Activated CD4-positive, alpha-beta T cell treated with anti-CD3 and anti-CD28 coated beads for 36 hours (primary cell): ENCODE measurements at regions of chr12 and their contacts with region 1.

Region 1: GRCh38 chr12:56224102-56224701 is at the start of gene NABP2:
- DNase-seq: peak; percentile 98
- ATAC-seq: peak; percentile 83
- H3K4me3 Mint-ChIP-seq: peak within 1 kb of the TSS; percentile 98
- H3K27ac Mint-ChIP-seq: peak within 1 kb of the TSS; percentile 88
- H3K4me1 Mint-ChIP-seq: peaks cover 37% of the 10 kb centered on the region
- H3K27me3 Mint-ChIP-seq: no peaks in the 10 kb centered on the region
- total RNA-seq, gene NABP2: 69.1 to 76.0 TPM

Region 2: DNA sequence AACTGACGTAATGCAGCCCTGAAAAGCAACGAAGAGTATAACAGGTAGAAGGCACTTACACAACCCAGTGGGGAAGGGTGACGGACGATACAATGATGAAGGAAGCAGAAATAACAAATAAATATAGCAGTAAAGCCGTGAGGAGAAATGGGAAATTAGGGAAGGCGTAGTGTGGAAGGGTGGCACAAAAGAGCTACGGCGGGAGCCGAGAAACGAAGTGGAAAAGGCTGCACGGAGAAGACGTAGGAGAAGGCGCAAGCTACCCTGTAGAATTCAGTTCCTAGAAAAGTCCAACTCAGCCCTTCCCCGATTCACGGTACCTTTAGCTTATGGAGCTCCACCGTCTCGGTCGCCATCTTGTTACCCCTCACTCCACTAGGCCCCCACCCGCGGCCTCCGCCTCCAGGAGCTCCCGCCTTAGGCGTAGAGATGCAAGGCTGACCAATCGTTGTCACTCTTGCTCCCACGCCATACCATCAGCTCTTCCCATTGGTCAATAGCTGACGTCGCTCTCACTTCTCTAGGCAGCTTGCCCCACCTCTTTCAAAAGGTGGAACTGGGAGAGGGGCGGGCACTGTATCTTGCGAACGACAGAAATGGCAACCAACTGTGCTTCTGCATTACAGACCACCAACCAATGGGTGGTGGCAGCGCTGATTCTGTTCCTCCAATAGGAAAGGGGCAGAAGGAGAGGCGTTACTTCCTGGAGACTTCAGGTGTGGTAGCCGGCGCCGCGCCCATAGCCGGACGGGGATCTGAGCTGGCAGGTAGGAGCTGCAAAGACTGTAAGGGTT is 406.7 kb before region 1 on chr12 and contains the starts of genes ORMDL2 and SARNP:
- CTCF ChIA-PET with region 1: no interaction called
- POLR2A ChIA-PET with region 1: interaction called, 3 read pairs
- intact Hi-C with region 1: loop called in 1 of 2 experiments (anchors 2 kb)
- DNase-seq: peak; percentile 97
- ATAC-seq: peak; percentile 98
- H3K4me3 Mint-ChIP-seq: no peak within 1 kb of the TSS
- H3K27ac Mint-ChIP-seq: no peak within 1 kb of the TSS
- H3K4me1 Mint-ChIP-seq: peaks cover 49% of the 10 kb centered on the region
- H3K27me3 Mint-ChIP-seq: no peaks in the 10 kb centered on the region
- total RNA-seq, gene ORMDL2: 29.4 to 35.6 TPM
- total RNA-seq, gene SARNP: 111 to 114 TPM

Region 3: DNA sequence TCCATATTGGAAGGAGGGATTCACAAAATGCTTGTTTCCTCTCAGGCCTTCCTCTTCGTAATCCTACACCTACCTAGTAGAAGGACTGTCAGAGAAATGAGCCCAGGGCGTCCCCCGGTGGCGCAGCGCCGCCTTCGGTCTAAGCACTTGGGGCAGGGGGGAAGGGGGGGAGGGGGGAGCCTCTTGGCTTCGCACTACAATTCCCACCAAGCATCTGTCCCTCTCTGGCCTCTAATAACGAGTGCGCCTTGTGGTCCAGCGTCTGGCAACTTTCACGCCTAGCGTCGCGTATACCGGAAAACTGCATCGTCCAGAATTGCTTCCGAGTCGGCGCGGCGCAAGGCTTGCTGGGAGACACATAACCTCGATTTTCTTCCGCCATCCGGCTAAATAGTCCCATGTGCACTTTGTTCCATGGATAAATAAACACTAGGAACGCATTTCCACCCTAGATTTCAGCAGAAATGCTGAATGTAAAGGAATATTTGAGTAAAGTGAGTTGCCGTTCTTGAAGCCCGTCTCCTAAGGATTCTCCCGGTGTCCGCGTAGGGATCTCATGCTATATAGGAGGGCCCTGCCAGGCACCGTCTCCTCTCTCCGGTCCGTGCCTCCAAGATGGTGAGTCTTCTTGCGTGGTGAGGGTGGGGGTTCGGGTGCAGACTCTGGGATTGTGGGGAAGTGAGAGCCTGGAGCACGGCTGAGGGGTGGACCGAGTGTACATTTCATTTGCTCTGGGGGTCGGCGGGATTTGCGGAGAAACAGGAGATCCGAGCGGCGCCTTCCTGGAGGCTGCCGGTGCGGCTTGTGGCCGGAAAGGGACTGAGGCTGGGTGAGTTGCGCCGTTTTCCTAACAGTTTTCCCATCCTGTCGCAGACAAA is 182.4 kb before region 1 on chr12 and contains the start of gene RPS26:
- CTCF ChIA-PET with region 1: no interaction called
- POLR2A ChIA-PET with region 1: no interaction called
- intact Hi-C with region 1: loop called (anchors 2 to 5 kb)
- DNase-seq: peak; percentile 97
- ATAC-seq: peak; percentile 92
- H3K4me3 Mint-ChIP-seq: peak within 1 kb of the TSS; percentile 91
- H3K27ac Mint-ChIP-seq: peak within 1 kb of the TSS; percentile 99
- H3K4me1 Mint-ChIP-seq: peaks cover 61% of the 10 kb centered on the region
- H3K27me3 Mint-ChIP-seq: no peaks in the 10 kb centered on the region
- total RNA-seq, gene RPS26: 33.9 to 64.0 TPM

Region 4: DNA sequence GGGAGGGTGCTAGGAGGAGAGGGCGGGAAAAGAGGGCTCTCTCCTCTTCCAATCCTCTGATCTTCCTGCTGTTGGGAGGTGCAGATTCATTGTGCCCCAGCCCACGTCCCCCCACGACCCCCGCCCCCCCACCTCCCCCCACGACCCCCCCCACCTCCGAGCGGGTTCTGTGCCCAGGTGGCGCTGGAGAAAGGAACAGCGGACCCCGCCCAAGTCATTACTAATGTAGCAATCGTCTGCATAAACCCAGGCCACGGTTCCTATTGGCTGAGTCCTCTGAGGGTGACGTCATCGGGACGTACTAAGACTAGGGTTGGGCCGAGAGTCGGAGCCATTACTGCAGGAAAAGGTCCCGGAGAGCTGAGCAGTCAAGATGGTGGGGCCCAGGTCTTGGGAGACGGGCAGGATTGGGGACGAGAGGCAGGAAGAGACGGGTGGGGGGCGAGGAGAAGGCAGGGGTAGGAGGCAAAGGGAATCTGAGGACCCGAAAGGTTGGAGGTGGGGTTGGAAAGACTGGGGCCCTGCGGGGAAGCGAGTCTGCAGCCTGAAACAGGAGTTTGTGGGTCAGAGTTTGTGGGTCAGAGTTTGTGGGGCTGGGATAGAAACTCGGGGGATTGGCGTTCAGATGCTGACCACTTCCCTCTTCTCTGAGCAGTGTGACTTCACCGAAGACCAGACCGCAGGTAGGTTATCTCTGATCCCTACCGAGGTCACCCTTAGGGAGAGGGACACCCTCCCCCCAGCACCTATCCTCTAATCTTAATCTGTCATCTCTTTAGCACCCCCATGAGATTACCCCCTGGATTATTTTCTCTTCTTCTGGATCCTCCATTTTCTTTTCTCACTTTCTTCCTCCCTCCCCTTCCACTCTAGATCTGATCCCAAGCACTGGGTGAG is 65.9 kb before region 1 on chr12 and contains the start of gene MYL6:
- CTCF ChIA-PET with region 1: interaction called, 3 read pairs
- POLR2A ChIA-PET with region 1: no interaction called
- intact Hi-C with region 1: loop called in 1 of 2 experiments (anchors 2 kb)
- DNase-seq: peak; percentile 96
- ATAC-seq: peak; percentile 85
- H3K4me3 Mint-ChIP-seq: peak within 1 kb of the TSS; percentile 99
- H3K27ac Mint-ChIP-seq: peak within 1 kb of the TSS; percentile 96
- H3K4me1 Mint-ChIP-seq: peaks cover 30% of the 10 kb centered on the region
- H3K27me3 Mint-ChIP-seq: no peaks in the 10 kb centered on the region
- total RNA-seq, gene MYL6: 692 to 918 TPM

Region 5: GRCh38 chr12:56266693-56267442 is 42.7 kb after region 1 on chr12 and contains the start of gene COQ10A:
- CTCF ChIA-PET with region 1: interaction called, 6 read pairs
- POLR2A ChIA-PET with region 1: interaction called, 3 read pairs
- intact Hi-C with region 1: loop called in 1 of 2 experiments (anchors 1 kb)
- DNase-seq: peak; percentile 90
- ATAC-seq: peak; percentile 90
- H3K4me3 Mint-ChIP-seq: peak within 1 kb of the TSS; percentile 89
- H3K27ac Mint-ChIP-seq: peak within 1 kb of the TSS; percentile 89
- H3K4me1 Mint-ChIP-seq: peaks cover 9% of the 10 kb centered on the region
- H3K27me3 Mint-ChIP-seq: no peaks in the 10 kb centered on the region
- total RNA-seq, gene COQ10A: 5.2 to 7.5 TPM

Region 6: DNA sequence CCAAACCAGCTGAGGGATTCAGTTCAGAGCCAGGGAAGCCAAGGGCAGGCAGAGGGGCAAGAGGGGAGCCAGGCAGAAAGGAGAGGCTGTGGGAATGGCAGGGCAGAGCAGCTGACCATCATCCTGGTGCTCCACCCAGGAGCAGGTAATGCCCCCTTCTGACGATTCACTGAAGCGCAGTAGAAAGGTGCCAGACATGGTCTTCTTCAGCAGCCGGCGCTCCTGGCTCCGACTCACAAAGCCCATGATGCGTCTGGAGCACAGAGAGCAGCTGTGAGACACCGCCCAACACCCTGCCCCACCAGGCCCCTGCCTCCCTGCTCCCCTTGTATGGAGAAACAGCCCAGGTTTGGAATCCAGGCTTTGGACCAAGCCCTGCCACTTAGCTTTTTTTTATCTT is 122.5 kb after region 1 on chr12:
- CTCF ChIA-PET with region 1: no interaction called
- POLR2A ChIA-PET with region 1: no interaction called
- intact Hi-C with region 1: no loop called
- DNase-seq: peak; percentile 56
- ATAC-seq: peak; percentile 35
- H3K4me3 Mint-ChIP-seq: no peak overlapping the region
- H3K27ac Mint-ChIP-seq: no peak overlapping the region
- H3K4me1 Mint-ChIP-seq: peaks cover 3% of the 10 kb centered on the region
- H3K27me3 Mint-ChIP-seq: no peaks in the 10 kb centered on the region

Region 7: DNA sequence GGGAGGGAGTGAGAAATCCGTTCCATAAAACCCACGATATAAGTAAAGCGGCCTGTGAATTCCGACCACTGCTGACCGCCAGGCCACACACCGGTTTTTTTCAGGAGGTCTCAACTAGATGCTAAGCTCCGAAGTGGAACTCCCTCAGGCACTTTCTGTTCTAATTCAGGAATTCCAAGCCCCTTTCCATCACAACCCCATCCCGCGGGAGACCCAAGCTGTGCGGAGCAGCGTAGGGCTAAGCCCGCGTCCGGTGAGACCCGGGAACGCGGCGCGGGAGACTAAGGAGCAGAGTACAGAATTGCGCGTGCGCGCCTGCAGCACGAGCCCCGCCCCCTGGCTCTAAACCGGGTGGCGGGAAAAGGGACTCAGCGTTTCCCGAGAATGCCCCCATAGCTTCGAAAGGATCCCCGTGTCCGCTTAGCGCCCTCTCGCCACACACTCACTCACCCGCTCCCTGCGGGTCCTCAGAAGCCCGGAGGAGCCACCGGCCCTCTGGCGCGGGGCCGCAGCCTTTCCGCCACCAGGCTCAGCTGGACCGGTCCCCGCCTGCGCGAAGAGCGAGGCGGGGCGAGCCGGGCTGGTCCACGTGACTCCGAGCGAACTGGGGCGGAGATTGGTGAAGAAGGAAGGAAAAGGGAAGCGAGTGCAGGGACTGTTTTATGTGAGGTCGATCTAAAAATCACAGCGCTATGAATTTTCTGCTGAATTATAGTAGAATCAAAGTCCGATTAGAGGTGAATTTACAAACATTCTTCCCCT is 224.8 kb after region 1 on chr12 and contains the start of gene TIMELESS:
- CTCF ChIA-PET with region 1: interaction called, 5 read pairs
- POLR2A ChIA-PET with region 1: no interaction called
- intact Hi-C with region 1: loop called in 1 of 2 experiments (anchors 1 kb)
- DNase-seq: peak; percentile 92
- ATAC-seq: peak; percentile 97
- H3K4me3 Mint-ChIP-seq: peak within 1 kb of the TSS; percentile 81
- H3K27ac Mint-ChIP-seq: peak within 1 kb of the TSS; percentile 97
- H3K4me1 Mint-ChIP-seq: peaks cover 19% of the 10 kb centered on the region
- H3K27me3 Mint-ChIP-seq: no peaks in the 10 kb centered on the region
- total RNA-seq, gene TIMELESS: 46.3 to 47.3 TPM